Panc1 (cell line): ENCODE measurements at regions of chr1 and their contacts with region 1.

Region 1: DNA sequence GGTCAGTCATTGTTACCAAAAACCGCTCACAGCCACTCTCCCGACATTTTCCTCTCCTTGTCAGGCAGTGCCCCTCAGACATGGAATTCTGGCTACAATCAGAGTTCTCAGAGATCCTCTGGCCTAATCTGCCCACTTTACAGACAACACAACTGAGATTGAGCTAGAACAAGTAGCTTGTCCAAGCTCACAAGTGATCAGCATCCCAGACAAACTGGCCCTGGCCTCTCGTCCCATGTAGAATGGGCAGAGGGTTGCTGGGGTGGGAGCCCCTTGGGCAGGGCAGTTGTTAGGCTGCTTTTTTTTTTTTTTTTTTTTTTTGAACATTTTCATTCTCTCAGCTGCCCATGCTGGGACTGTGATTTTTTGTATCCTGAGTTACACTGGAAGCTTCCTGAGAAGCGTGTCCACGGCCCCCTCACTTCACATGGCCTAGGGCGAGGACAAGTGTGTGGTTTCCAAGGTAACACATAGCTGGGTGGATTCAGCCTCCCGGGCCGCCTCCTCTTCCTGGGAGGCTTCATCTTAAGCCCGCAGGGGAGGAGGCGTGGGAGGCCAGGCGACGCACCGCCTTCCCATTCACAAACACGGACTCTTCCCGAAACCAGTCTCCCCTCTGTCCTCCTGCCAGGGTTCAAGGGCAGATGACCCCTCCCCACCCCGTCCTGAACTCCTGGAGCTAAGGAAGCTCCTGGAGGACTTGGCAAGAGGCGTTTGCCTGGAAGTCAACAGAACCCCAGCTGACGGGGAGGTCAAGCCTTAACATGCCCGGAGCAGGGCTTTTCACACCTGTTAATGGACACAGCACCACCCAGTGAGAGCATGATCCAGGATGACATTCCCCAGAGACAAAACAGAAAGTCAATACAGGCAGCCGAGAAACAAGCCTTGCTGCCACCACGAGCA is 56.9 kb downstream of the KCNN3 start:
- DNase-seq: no peak
- ATAC-seq: no peak
- H3K4me3 ChIP-seq: no peak overlapping the region
- H3K27ac ChIP-seq: no peak overlapping the region
- H3K4me1 ChIP-seq: no peaks in the 10 kb centered on the region
- H3K27me3 ChIP-seq: no peaks in the 10 kb centered on the region
- CTCF ChIP-seq: no peak

Region 2: DNA sequence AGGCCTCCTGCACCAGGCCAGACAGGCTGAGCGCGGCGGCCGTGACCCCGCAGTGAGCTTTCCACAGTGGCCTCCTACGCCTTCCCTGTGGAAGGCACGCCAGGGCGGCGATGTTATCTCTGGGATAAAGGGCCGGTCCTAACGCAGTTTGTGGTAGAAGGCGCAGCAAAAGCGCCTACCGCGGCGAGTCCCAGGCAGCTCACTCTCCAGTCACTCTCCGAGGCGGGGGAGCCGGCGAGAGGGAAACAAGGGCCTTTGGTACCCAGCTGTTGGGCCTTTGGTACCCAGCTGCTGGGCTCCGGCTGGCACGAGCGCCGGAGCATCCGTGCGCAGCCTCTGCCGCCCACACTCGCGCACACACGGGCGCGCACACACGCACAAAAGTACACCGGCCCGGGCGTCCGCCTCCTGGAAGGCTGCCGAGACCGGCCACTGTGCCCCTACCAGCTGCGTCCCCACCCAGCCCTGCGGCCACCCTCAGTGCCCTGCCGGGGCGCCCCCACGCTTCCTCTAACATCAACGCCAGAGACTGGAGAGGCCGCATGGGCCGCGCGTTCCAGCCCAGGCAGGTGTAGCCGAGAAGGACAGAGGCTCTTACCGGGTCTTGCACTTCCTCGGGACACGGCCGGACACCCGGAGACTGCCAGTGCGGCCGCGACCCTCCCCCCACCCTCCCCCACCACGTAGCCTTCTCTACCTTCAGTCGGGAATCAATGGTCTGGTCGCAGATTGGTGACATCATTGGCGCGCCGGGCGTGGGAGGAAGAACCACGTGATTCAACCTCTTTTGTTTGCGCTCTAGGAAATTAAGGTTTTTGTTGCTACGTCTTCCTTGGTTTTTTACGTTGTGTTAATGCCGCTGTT is 185.7 kb before region 1 on chr1:
- CTCF ChIA-PET with region 1: no interaction called
- POLR2A ChIA-PET with region 1: interaction called, 12 read pairs
- in situ Hi-C with region 1: no loop called
- intact Hi-C with region 1: no loop called
- DNase-seq: peak; percentile 71
- ATAC-seq: peak; percentile 86
- H3K4me3 ChIP-seq: peak overlapping the region; percentile 81 to 88
- H3K27ac ChIP-seq: peak overlapping the region; percentile 99
- H3K4me1 ChIP-seq: peaks cover 12% of the 10 kb centered on the region; the same call in 1 of the 2 replicates
- H3K27me3 ChIP-seq: peaks cover 7% of the 10 kb centered on the region; the same call in 1 of the 2 replicates
- CTCF ChIP-seq: no peak